Upper lobe of right lung (tissue), 1 donor: ENCODE measurements at regions of chr13 and their contacts with region 1.

Region 1: GRCh38 chr13:103762523-103762922 is 696.3 kb upstream of the SLC10A2 start:
- DNase-seq: no peak
- ATAC-seq: no peak
- H3K4me3 ChIP-seq: no peak overlapping the region
- H3K27ac ChIP-seq: no peak overlapping the region
- H3K4me1 ChIP-seq: no peaks in the 10 kb centered on the region
- H3K27me3 ChIP-seq: no peaks in the 10 kb centered on the region
- CTCF ChIP-seq: no peak

Region 2: GRCh38 chr13:103236213-103236612 is 526.3 kb before region 1 on chr13:
- intact Hi-C with region 1: no loop called
- DNase-seq: no peak
- ATAC-seq: no peak
- H3K4me3 ChIP-seq: no peak overlapping the region
- H3K27ac ChIP-seq: no peak overlapping the region
- H3K4me1 ChIP-seq: no peaks in the 10 kb centered on the region
- H3K27me3 ChIP-seq: no peaks in the 10 kb centered on the region
- CTCF ChIP-seq: no peak

Region 3: DNA sequence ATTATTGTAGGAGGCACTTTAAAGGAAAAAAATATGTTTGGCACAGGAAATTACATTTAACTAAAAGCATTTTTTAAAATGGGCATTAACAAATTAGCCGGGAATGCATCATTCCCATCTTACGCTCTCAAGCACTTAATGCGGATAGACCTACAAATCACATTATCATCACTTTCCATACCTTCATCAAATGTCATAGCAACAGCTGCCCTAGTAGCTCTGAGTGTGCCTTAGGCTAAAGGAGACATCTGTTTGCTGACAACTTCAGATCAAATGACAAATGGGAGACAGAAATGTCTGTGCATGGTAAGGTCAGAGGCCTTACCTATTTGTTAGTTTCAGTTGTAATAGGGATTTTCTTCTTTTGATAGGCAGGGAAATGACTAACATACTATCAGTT is 76.9 kb after region 1 on chr13:
- intact Hi-C with region 1: loop called (anchors 10 kb)
- DNase-seq: no peak
- ATAC-seq: no peak
- H3K4me3 ChIP-seq: no peak overlapping the region
- H3K27ac ChIP-seq: no peak overlapping the region
- H3K4me1 ChIP-seq: no peaks in the 10 kb centered on the region
- H3K27me3 ChIP-seq: no peaks in the 10 kb centered on the region
- CTCF ChIP-seq: no peak